ENCODE measurements at regions of chr21 and their contacts with region 1.

Region 1: DNA sequence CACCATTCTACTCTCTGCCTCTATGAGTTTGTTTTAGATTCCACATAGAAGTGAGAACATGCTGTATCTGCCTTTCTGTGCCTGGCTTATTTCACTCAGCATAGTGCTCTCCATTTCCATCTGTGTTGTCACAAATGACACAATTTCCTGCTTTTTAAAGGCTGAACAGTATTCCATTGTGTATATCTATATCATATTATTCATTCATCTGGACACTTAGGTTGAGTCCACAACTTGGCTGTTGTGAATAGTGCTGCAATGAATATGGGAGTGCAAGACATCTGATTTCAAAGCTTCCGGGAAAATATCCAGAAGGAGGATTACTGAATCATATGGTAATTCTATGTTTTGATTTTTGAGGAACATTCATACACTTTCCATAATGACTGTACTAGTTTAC is 20.1 kb upstream of the DONSON start:
- DNase-seq: no peak
- H3K27ac ChIP-seq: no peak overlapping the region
- CTCF ChIP-seq: no peak

Region 2: DNA sequence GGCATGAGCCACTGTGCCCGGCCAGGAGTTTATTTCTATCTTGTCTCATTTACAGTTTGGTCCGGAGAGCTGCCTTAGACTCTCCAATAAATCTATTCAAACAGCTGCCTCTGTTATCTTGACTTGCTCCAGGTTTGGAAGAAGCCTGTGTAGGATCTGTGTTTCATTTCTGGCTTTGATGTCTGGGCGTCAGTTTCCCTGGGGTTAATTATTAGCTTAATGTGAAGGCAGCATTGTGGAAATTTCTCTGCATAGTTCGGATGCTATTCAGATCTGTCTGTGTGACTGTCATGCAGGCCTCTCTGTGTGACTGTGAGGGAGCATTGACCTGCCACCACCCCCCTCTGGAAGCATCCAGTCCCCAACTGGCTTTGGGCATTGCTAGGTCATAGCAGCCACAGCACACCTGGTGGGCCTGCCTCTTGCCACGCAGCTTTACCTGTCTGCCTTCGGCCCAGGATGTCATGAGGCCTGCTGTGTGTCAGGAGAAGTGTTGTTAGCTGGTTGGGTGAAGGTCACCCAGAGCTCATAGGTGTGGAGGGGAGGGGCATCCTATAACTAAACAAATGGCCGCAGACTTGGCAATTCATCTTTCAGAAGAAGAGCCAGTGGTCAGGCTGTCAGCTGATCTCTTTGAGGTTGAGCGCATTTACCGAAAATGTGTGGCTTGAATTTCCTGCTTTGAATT is 195.6 kb before region 1 on chr21:
- CTCF ChIA-PET with region 1: no interaction called
- POLR2A ChIA-PET with region 1: no interaction called
- DNase-seq: no peak
- H3K27ac ChIP-seq: peak overlapping the region; percentile 51
- CTCF ChIP-seq: no peak

Region 3: DNA sequence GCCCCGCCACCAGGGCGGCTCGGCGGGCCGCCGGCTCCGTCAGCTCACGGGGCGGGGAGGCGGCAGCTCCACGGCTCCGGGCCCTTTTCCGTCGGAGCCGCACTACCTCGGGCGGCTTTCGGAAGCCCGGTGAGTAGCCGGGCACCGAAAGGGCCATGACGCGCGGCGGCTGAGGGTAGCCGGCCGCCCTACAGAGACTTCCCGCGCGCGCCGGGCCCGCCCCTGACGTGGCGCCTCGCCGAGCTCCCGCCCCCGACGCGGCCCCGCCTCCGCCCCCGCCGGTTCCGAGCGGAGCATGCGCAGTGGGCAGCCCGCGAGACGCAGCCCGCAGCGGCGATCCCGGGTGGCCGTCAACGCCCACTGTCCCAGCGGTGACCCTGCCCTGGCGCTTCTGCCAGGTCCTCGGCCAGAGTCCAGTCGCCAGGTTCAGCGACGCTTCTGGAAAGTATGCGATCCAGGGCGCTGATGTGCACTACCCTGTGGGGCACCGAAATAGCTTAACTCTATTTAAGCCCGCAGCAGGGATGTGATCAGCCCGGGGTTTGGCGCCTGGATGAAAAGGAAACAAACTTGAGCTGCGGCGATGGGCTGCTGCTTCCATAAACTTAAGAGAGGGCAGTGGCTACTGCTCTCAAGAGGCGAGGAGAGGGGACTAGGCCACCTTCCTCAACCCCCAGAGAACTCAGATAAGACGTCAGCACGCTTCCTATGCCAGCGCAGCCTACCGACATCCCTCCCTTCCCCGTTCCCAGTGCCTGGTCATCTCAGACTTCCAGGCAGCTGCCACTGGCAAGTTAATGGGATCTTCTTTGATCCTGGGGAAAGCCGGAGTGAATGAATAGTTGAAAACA is 19.8 kb before region 1 on chr21 and contains the start of gene DONSON:
- CTCF ChIA-PET with region 1: interaction called, 15 read pairs
- POLR2A ChIA-PET with region 1: interaction called, 4 read pairs
- DNase-seq: peak; percentile 96
- H3K27ac ChIP-seq: peak within 1 kb of the TSS; percentile 82
- CTCF ChIP-seq: no peak

Region 4: GRCh38 chr21:33619726-33620125 is 11.2 kb after region 1 on chr21:
- CTCF ChIA-PET with region 1: interaction called, 11 read pairs
- POLR2A ChIA-PET with region 1: interaction called, 3 read pairs
- DNase-seq: no peak
- H3K27ac ChIP-seq: no peak overlapping the region
- CTCF ChIP-seq: no peak